ENCODE measurements at regions of chr10 and their contacts with region 1.

Region 1: DNA sequence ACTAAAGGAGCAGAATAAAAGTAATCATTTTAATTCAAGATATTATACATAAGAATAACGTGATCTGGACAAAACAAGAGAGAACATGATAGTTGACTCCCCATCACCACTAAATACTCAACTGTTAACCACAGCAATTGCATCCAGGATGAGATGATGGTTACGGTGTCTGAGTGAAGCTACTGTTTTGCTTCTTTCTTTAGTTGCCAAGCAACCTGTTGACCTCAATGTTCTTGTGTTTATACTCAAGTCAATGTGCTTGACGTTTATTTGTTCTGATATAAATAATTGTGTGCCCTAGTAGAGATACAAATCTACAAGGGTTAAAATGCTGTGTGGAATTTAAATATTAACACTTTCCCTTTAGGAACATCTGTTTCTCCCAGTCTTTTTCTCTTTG is 31.4 kb upstream of the MPP7 start:
- DNase-seq: peak in 1 of 2 donors; percentile 96
- ATAC-seq: peak; percentile 59 to 84 (median 77)
- H3K4me3 ChIP-seq: peak overlapping the region; percentile 52
- H3K4me3 Mint-ChIP-seq: peak overlapping the region; percentile 91
- H3K27ac ChIP-seq: peak overlapping the region; percentile 97
- H3K27ac Mint-ChIP-seq: peak overlapping the region; percentile 95 to 100
- H3K4me1 ChIP-seq: peaks cover 57% of the 10 kb centered on the region
- H3K4me1 Mint-ChIP-seq: peaks cover 57 to 62% of the 10 kb centered on the region in 2 donors
- H3K27me3 ChIP-seq: no peaks in the 10 kb centered on the region
- H3K27me3 Mint-ChIP-seq: no peaks in the 10 kb centered on the region
- CTCF ChIP-seq: no peak

Region 2: GRCh38 chr10:26486991-26487850 is 1847.1 kb before region 1 on chr10:
- intact Hi-C with region 1: loop called (anchors 5 kb)
- DNase-seq: peak; percentile 61 to 87
- ATAC-seq: peak; percentile 72 to 87 (median 86)
- H3K4me3 ChIP-seq: no peak overlapping the region
- H3K4me3 Mint-ChIP-seq: peak overlapping the region; percentile 78
- H3K27ac ChIP-seq: peak overlapping the region; percentile 90
- H3K27ac Mint-ChIP-seq: peak overlapping the region; percentile 96 to 98
- H3K4me1 ChIP-seq: peaks cover 45% of the 10 kb centered on the region
- H3K4me1 Mint-ChIP-seq: peaks cover 64 to 66% of the 10 kb centered on the region in 2 donors
- H3K27me3 ChIP-seq: no peaks in the 10 kb centered on the region
- H3K27me3 Mint-ChIP-seq: no peaks in the 10 kb centered on the region
- CTCF ChIP-seq: no peak

Region 3: DNA sequence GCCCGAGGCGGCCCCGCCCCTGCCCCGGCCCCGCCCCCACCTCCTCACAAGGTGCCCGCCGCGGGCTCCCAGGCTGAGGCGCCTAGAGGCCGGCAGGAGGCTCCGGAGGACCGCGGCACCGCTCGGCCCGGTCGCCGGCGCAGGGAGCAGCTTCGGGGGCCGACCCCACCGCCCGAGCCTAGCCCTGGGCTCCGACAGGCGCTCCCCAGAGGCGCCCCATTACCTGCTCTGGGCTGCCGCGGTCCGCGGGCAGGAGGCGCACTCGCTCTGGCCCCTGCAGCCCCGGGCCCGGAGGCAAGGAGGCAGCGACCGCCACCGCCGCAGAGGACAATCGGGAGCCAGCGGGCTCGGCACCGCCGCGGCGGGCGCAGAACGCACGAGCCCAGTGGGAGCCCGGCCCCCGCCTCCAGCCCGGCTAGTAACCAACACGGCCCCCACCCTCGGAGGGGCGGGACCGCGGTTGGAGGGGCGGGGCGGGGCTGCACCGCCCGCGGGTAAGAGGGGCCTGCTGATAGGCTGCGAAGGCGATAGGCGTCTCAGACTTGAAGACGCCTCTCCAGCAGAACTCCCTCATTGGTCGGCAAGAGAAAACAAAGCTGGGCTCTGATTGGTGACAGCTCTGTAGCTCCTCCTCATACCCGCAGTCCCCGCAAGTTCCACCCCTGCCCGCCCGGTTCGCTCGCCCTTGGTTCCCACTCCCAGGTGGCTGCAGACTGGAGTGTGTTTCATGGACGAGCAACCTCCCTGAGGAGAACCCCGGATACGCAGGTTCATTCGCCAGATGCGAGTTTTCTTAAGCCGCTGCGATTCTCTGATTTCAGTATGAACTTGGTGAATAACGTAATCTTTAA is 31.4 kb before region 1 on chr10 and contains the start of gene MPP7:
- intact Hi-C with region 1: loop called (anchors 1 kb)
- DNase-seq: peak; percentile 97 to 99
- ATAC-seq: peak; percentile 88 to 98 (median 88)
- H3K4me3 ChIP-seq: peak within 1 kb of the TSS; percentile 59
- H3K4me3 Mint-ChIP-seq: peak within 1 kb of the TSS; percentile 96
- H3K27ac ChIP-seq: peak within 1 kb of the TSS; percentile 72
- H3K27ac Mint-ChIP-seq: peak within 1 kb of the TSS; percentile 91
- H3K4me1 ChIP-seq: peaks cover 4% of the 10 kb centered on the region
- H3K4me1 Mint-ChIP-seq: peaks cover 26 to 31% of the 10 kb centered on the region in 2 donors
- H3K27me3 ChIP-seq: no peaks in the 10 kb centered on the region
- H3K27me3 Mint-ChIP-seq: peaks cover 9% of the 10 kb centered on the region in 2 donors
- CTCF ChIP-seq: peak; percentile 57
- total RNA-seq, gene MPP7: 11.5 to 21.0 (median 19.1) TPM

Region 4: GRCh38 chr10:28367929-28368484 is 33.7 kb after region 1 on chr10:
- intact Hi-C with region 1: loop called (anchors 1 kb)
- DNase-seq: peak in 1 of 2 donors; percentile 88
- ATAC-seq: peak; percentile 92 to 97 (median 93)
- H3K4me3 ChIP-seq: no peak overlapping the region
- H3K4me3 Mint-ChIP-seq: peak overlapping the region; percentile 84
- H3K27ac ChIP-seq: peak overlapping the region; percentile 96
- H3K27ac Mint-ChIP-seq: peak overlapping the region; percentile 89
- H3K4me1 ChIP-seq: peaks cover 37% of the 10 kb centered on the region
- H3K4me1 Mint-ChIP-seq: peaks cover 25 to 31% of the 10 kb centered on the region in 2 donors
- H3K27me3 ChIP-seq: no peaks in the 10 kb centered on the region
- H3K27me3 Mint-ChIP-seq: no peaks in the 10 kb centered on the region
- CTCF ChIP-seq: no peak

Region 5: DNA sequence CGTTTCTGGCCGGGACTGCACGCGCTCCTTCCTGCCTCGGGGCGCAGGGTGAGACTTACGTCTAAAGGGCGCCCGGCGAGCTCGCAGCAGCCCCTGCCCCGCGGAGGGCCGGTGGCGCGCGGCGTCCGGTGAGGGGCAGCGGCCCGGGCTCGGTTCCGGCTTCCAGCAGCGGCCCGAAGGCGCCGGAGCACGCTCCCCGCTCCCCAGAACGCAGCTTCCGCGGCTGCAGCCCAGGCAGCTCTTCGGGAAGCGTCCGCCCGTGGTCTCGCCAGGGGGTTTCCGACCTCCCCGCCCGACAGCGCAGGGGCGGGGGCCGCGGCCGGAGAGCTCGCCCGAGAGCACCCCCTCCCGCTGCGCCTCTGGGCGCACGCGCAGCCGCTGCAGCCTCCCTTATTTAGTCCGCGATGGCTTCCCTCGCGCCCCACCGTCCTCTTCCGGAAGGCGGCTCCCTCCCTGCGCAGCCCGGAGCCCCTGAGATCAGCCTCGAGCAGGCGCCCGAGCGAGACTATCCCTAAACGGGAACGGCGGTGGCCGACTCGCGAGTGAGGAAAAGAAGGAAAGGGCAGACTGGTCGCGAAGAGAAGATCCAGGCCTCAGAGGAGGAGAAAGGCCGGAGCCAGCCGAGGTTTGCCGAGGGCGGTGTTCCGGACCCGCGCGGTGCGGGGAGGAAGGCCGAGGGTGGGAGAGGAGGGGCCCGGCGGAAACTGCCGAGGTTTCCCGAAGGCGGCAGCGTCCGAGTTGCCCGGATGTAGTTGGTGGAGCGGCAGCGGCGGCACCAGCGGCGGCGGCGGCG is 198.3 kb after region 1 on chr10 and contains the start of gene WAC:
- intact Hi-C with region 1: loop called (anchors 1 kb)
- DNase-seq: peak; percentile 97 to 98
- ATAC-seq: peak; percentile 77 to 92 (median 81)
- H3K4me3 ChIP-seq: peak within 1 kb of the TSS; percentile 83
- H3K4me3 Mint-ChIP-seq: peak within 1 kb of the TSS; percentile 100
- H3K27ac ChIP-seq: peak within 1 kb of the TSS; percentile 97
- H3K27ac Mint-ChIP-seq: peak within 1 kb of the TSS; percentile 100
- H3K4me1 ChIP-seq: peaks cover 18% of the 10 kb centered on the region
- H3K4me1 Mint-ChIP-seq: peaks cover 59 to 81% of the 10 kb centered on the region in 2 donors
- H3K27me3 ChIP-seq: no peaks in the 10 kb centered on the region
- H3K27me3 Mint-ChIP-seq: no peaks in the 10 kb centered on the region
- CTCF ChIP-seq: no peak
- total RNA-seq, gene WAC: 225 to 245 (median 226) TPM

Measured in natural killer cell (primary cell).